ENCODE measurements at regions of chr1 and their contacts with region 1.

Region 1: DNA sequence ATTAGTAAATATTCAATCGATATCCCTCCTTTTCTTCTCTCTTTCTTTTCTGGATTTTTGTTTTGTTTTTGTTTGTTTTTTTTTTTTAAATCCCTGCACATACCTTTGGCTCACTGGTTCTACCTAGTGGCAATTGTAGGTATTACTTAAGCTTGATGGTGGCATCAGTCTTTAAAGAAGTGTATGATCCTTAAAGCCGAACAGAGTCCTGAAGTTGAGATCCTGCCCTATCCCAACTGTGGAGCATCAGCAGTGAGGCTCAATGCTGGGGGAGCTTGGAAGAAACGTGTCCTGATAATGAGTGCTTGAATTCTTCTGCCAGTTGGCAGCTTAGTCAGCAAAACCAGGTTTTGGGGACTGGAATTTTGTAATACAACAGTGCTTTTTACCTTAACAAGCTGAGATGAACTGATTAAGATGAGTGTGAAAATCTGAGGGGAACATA is 60.8 kb downstream of the FASLG start:
- DNase-seq: no peak
- ATAC-seq: peak; percentile 71
- H3K4me3 Mint-ChIP-seq: no peak overlapping the region
- H3K27ac Mint-ChIP-seq: peak overlapping the region; percentile 11
- H3K4me1 Mint-ChIP-seq: peaks cover 49% of the 10 kb centered on the region
- H3K27me3 Mint-ChIP-seq: peaks cover 5% of the 10 kb centered on the region
- CTCF ChIP-seq: peak; percentile 93

Region 2: GRCh38 chr1:172532700-172533509 is 186.8 kb before region 1 on chr1 and contains the start of gene SUCO:
- CTCF ChIA-PET with region 1: interaction called, 7 read pairs
- POLR2A ChIA-PET with region 1: interaction called, 3 read pairs
- intact Hi-C with region 1: loop called (anchors 10 kb)
- DNase-seq: peak; percentile 99
- ATAC-seq: peak; percentile 88
- H3K4me3 Mint-ChIP-seq: peak within 1 kb of the TSS; percentile 91
- H3K27ac Mint-ChIP-seq: peak within 1 kb of the TSS; percentile 100
- H3K4me1 Mint-ChIP-seq: peaks cover 38% of the 10 kb centered on the region
- H3K27me3 Mint-ChIP-seq: peaks cover 3% of the 10 kb centered on the region
- CTCF ChIP-seq: no peak
- total RNA-seq, gene SUCO: 22.8 TPM

Region 3: DNA sequence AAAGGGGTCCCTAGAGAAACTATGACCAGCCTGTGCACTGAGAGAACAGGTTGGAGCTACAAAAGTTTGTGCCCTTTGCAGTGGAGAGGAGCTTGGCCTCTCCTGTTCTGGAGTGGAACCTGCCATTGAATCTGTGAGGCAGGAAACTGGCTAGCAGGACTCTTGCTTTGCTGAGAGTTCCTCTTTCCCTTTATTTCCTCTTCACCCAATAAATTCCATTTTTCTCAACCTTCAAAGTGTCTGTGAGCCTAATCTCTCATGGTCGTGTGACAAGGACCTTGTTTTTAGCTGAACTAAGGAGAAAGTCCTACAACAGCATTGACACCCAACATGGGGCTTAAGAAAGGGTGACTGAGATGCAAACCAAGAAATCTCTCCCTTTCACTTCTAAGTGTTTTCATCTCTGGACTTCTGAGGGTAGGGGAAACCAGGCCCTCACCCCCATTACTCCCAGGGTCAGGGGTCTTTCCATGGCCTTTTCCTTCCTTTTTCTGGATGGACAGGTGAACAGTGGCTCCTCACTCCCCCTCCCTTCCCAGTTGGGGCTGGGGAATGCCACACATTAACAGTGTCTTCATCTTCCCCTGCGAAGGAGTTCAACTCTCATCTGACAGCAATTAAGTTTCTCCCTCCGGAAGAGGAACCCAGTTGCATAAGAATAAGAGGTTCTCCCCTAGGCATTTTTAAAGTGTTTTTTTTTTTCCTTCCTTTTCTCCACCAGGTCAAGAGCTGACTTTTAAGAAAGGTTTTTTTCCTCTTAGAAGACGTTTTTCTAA is 103.3 kb before region 1 on chr1:
- CTCF ChIA-PET with region 1: interaction called, 138 read pairs
- POLR2A ChIA-PET with region 1: interaction called, 3 read pairs
- intact Hi-C with region 1: no loop called
- DNase-seq: no peak
- ATAC-seq: no peak
- H3K4me3 Mint-ChIP-seq: no peak overlapping the region
- H3K27ac Mint-ChIP-seq: no peak overlapping the region
- H3K4me1 Mint-ChIP-seq: no peaks in the 10 kb centered on the region
- H3K27me3 Mint-ChIP-seq: no peaks in the 10 kb centered on the region
- CTCF ChIP-seq: no peak

Region 4: DNA sequence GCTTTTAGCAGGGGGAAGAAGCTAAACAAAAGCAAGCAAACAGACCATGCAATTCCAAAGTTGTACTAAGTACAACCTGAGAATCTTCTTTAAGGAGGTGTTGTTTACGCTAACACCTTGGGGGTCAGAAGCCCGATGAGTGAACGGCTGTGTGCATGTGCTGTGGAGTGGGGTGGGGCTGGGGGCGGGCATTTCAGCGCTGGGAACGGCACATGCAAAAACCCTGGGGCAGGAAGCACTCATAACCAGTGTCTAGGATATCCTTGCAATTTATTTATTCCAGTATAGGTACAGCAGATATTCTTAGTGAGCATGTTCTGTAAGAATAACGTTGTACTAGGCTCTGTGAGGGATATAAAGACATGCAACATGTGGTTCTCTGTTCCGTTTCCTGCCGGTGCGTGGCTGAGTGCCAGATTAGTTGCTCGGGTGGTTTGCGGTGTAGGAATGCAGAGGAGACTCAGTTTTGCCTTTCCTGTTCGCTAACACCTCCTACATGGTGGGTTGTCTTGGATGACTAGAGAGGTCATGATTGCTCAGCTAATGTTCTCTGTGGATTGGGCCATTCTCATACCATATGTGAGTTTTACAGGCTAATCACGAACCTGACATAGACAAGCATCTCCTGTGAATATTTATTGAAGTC is 57.1 kb before region 1 on chr1:
- CTCF ChIA-PET with region 1: interaction called, 16 read pairs
- POLR2A ChIA-PET with region 1: interaction called, 3 read pairs
- intact Hi-C with region 1: no loop called
- DNase-seq: peak; percentile 96
- ATAC-seq: peak; percentile 75
- H3K4me3 Mint-ChIP-seq: peak overlapping the region; percentile 79
- H3K27ac Mint-ChIP-seq: peak overlapping the region; percentile 85
- H3K4me1 Mint-ChIP-seq: peaks cover 80% of the 10 kb centered on the region
- H3K27me3 Mint-ChIP-seq: peaks cover 8% of the 10 kb centered on the region
- CTCF ChIP-seq: no peak

Region 5: GRCh38 chr1:174217787-174218574 is 1498.3 kb after region 1 on chr1:
- CTCF ChIA-PET with region 1: no interaction called
- POLR2A ChIA-PET with region 1: no interaction called
- intact Hi-C with region 1: no loop called
- DNase-seq: no peak
- ATAC-seq: peak; percentile 72
- H3K4me3 Mint-ChIP-seq: no peak overlapping the region
- H3K27ac Mint-ChIP-seq: no peak overlapping the region
- H3K4me1 Mint-ChIP-seq: peaks cover 4% of the 10 kb centered on the region
- H3K27me3 Mint-ChIP-seq: no peaks in the 10 kb centered on the region
- CTCF ChIP-seq: peak; percentile 84